Kidney (tissue), 22 donors: ENCODE measurements at regions of chr17 and their contacts with region 1.

Region 1: GRCh38 chr17:34254651-34255380 is at the start of gene CCL2:
- DNase-seq: peak; percentile 62 to 93 (median 75)
- H3K4me3 ChIP-seq: peak within 1 kb of the TSS; percentile 57 to 69 (median 62)
- H3K27ac ChIP-seq: peak within 1 kb of the TSS; percentile 74 to 86
- H3K4me1 ChIP-seq: peaks cover 0 to 25% (median 22%) of the 10 kb centered on the region in 3 donors
- H3K27me3 ChIP-seq: no peaks in the 10 kb centered on the region
- CTCF ChIP-seq: no peak
- total RNA-seq, gene CCL2: 49.9 TPM

Region 2: GRCh38 chr17:34095106-34095505 is 159.7 kb before region 1 on chr17:
- intact Hi-C with region 1: no loop called
- DNase-seq: no peak
- H3K4me3 ChIP-seq: no peak overlapping the region
- H3K27ac ChIP-seq: no peak overlapping the region
- H3K4me1 ChIP-seq: no peaks in the 10 kb centered on the region
- H3K27me3 ChIP-seq: no peaks in the 10 kb centered on the region
- CTCF ChIP-seq: no peak

Region 3: GRCh38 chr17:34207572-34207971 is 47.2 kb before region 1 on chr17:
- intact Hi-C with region 1: no loop called
- DNase-seq: no peak
- H3K4me3 ChIP-seq: no peak overlapping the region
- H3K27ac ChIP-seq: no peak overlapping the region
- H3K4me1 ChIP-seq: no peaks in the 10 kb centered on the region
- H3K27me3 ChIP-seq: no peaks in the 10 kb centered on the region
- CTCF ChIP-seq: no peak

Region 4: GRCh38 chr17:34318474-34318873 is 63.7 kb after region 1 on chr17:
- intact Hi-C with region 1: loop called (anchors 10 kb)
- DNase-seq: no peak
- H3K4me3 ChIP-seq: no peak overlapping the region
- H3K27ac ChIP-seq: no peak overlapping the region
- H3K4me1 ChIP-seq: peaks cover 0 to 3% (median 0%) of the 10 kb centered on the region in 3 donors
- H3K27me3 ChIP-seq: no peaks in the 10 kb centered on the region
- CTCF ChIP-seq: no peak